OCI-LY7 (cell line): ENCODE measurements at regions of chr6 and their contacts with region 1.

Region 1: DNA sequence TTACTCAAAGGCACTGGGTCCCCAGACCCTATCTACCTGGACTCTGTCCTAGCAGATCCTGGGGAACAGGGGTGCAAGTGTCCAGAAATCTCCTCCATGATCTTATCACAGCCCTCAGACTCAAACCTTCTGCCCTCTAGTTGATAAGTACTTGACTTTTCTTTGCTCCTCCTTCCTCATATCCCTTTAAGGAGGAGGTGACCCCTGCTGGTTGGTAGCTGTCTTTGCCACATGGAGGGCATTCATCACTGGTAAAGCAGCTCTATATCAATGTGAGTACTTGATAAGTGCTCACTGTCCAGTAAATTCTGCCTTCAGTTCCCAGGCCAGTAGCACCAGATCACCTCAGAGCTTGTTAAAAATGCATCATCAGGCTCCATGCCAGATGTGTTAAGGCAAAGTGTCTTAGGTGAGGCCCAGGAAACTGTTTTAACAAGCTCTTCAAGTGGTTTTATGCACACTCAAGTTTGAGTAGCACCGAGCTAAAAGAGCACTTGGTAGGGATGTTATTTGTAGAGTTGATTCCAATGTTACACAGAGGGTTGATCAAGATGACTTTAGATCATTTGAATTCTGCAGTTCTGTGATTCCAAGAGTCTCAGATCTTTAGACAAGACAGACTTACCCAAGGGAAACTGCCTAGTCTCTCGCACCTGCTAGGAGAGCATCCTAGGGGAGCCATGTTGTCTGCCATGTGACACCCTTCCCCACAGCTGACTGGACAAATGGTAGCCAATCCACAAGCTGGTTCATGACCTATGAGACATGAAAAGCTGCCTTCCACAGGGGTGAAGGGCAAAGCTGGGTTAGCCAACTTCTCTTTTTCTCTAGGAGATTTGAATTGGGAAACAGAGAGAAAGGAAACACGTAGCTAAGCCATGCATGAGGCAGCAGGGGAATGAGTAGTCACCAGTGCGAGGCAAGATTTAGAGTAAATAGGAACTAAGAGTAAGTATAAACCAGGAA is 18.6 kb downstream of the TREML2 start:
- DNase-seq: peak; percentile 80
- H3K4me3 ChIP-seq: no peak overlapping the region
- H3K27ac ChIP-seq: no peak overlapping the region
- H3K4me1 ChIP-seq: peaks cover 30% of the 10 kb centered on the region
- CTCF ChIP-seq: peak; percentile 87

Region 2: GRCh38 chr6:41092421-41093140 is 89.8 kb before region 1 on chr6:
- CTCF ChIA-PET with region 1: interaction called, 4 read pairs
- POLR2A ChIA-PET with region 1: interaction called, 7 read pairs
- intact Hi-C with region 1: loop called (anchors 1 kb)
- DNase-seq: peak; percentile 36
- H3K4me3 ChIP-seq: no peak overlapping the region
- H3K27ac ChIP-seq: no peak overlapping the region
- H3K4me1 ChIP-seq: no peaks in the 10 kb centered on the region
- CTCF ChIP-seq: peak; percentile 77

Region 3: GRCh38 chr6:41200296-41200900 is 18.0 kb after region 1 on chr6:
- CTCF ChIA-PET with region 1: interaction called, 7 read pairs
- POLR2A ChIA-PET with region 1: interaction called, 16 read pairs
- intact Hi-C with region 1: no loop called
- DNase-seq: peak; percentile 73
- H3K4me3 ChIP-seq: peak overlapping the region; percentile 65
- H3K27ac ChIP-seq: peak overlapping the region; percentile 95
- H3K4me1 ChIP-seq: peaks cover 49% of the 10 kb centered on the region
- CTCF ChIP-seq: no peak